Esophagus muscularis mucosa (tissue), 4 donors: ENCODE measurements at regions of chr13 and their contacts with region 1.

Region 1: DNA sequence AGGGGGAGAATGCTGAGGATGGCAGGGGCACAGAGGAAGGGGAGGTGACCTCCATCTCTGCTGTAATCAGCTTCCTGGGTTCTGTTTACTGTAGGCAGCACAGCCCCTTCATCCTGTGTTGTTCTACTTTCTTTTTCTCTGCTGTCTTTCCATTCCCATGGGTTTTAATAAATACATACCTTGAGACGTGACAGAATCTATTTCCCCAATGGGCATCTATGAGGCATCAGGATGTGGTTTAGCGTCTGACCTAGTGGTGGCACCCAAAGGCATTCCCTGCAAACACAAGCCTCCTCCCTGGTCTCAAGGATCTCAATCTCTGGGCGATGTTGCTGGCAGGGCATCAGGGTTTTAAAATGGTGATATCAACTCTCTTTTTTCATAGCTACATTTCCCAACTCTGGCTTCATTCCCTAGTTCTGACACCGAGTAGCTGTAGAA is 60.8 kb downstream of the ALOX5AP start:
- DNase-seq: no peak
- H3K4me3 ChIP-seq: peak overlapping the region; percentile 21 to 37 (median 24)
- H3K27ac ChIP-seq: peak overlapping the region in 1 of 4 donors; percentile 16
- H3K4me1 ChIP-seq: peaks cover 0 to 36% (median 33%) of the 10 kb centered on the region in 4 donors
- H3K27me3 ChIP-seq: no peaks in the 10 kb centered on the region
- CTCF ChIP-seq: no peak
- EP300 ChIP-seq: no peak
- POLR2A ChIP-seq: no peak

Region 2: GRCh38 chr13:30572859-30573275 is 223.3 kb before region 1 on chr13:
- intact Hi-C with region 1: loop called (anchors 5 kb)
- DNase-seq: no peak
- H3K4me3 ChIP-seq: peak overlapping the region; percentile 38 to 59 (median 48)
- H3K27ac ChIP-seq: peak overlapping the region; percentile 51 to 66 (median 63)
- H3K4me1 ChIP-seq: peaks cover 8 to 26% (median 20%) of the 10 kb centered on the region in 4 donors
- H3K27me3 ChIP-seq: no peaks in the 10 kb centered on the region
- CTCF ChIP-seq: peak in 2 of 3 experiments; percentile 22 to 36
- EP300 ChIP-seq: no peak
- POLR2A ChIP-seq: no peak

Region 3: GRCh38 chr13:30593001-30593400 is 203.2 kb before region 1 on chr13:
- intact Hi-C with region 1: no loop called
- DNase-seq: no peak
- H3K4me3 ChIP-seq: no peak overlapping the region
- H3K27ac ChIP-seq: no peak overlapping the region
- H3K4me1 ChIP-seq: no peaks in the 10 kb centered on the region
- H3K27me3 ChIP-seq: no peaks in the 10 kb centered on the region
- CTCF ChIP-seq: no peak
- EP300 ChIP-seq: no peak
- POLR2A ChIP-seq: no peak

Region 4: DNA sequence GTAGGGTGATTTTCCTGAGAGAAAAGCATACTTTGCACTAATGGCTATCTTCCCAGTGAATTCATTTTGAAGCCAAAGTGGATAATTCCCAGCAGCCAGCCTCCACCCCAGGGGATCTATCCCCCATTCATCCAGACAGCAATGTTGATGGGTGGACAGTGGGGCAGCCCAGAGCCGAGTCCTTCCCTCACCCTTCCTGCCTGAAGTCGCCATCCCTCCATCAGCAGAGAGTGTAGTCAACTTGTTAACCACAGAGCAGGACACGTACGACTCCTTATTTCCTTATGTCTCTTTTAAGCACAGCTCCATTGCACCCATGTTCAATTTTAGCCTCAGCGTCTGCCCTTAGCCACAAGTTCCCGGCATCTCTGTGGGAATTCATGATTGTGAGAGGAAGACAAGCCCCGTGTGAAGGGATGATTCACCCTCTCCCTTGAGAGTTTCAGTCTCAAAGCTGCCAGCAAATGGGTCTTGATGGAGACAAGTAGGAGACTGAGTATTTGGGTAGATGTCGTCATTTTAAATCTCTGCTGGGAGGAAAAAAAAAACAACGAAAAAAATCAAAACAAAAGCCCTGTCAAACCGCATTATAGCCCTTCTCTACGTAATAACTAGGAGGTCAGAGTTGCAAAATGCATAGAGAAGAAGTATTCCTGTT is 51.6 kb after region 1 on chr13:
- intact Hi-C with region 1: no loop called
- DNase-seq: no peak
- H3K4me3 ChIP-seq: no peak overlapping the region
- H3K27ac ChIP-seq: peak overlapping the region in 3 of 4 donors; percentile 47 to 63 (median 52)
- H3K4me1 ChIP-seq: peaks cover 0 to 5% (median 0%) of the 10 kb centered on the region in 4 donors
- H3K27me3 ChIP-seq: no peaks in the 10 kb centered on the region
- CTCF ChIP-seq: no peak
- EP300 ChIP-seq: no peak
- POLR2A ChIP-seq: no peak